Vagina (tissue), 2 donors: ENCODE measurements at regions of chr12 and their contacts with region 1.

Region 1: DNA sequence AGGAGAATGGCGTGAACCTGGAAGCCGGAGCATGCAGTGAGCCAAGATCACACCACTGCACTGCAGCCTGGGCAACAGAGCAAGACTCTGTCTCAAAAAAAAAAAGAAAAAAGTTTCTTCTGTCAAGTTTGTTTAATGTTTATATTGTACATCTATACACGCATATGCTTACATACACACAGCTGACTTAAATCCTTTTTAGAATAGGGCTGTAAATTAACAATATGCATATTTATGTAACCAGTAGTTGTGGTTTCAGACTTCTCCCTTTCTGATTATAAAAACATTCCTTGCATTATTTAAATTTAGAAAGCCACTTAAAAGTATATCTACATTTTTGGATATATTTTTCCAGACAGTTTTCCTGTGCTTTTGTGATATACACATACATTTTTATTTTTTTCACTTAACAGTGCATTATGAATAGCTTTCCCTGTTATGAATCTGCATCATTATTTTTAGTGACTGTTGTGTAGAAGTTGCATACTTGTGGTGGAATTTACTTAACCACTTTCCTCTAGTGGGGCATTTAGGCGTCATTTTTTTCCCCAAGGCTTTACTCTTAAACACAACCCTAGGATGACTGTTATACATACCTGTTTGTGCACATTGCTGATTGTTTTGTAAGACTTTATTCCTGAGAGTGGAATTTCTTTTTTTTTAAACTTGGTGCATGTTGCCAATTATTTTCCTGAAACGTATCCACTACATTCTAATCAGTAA is 29.4 kb downstream of the POLR3B start:
- DNase-seq: no peak
- H3K4me3 ChIP-seq: no peak overlapping the region
- H3K27ac ChIP-seq: no peak overlapping the region
- H3K4me1 ChIP-seq: no peaks in the 10 kb centered on the region
- H3K27me3 ChIP-seq: no peaks in the 10 kb centered on the region
- CTCF ChIP-seq: no peak
- POLR2A ChIP-seq: no peak

Region 2: DNA sequence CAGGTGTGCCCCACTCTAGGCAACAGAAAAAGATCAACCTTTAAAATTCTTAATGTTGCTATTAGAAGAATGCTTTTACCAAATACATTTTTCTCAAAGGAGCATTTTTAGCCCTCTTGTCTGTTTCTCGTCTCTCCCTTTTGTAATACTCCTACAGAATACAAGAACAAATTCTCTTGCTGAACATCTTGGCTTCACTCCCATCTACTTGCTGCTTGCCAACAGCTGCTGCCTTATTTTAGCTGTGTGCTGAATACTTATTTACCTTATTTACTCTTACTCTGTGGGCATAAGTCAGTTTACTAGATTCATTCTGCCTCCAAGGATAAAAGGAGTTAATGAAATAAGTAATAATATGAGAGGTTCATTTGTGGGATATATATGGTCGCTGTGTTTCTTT is 41.4 kb after region 1 on chr12:
- intact Hi-C with region 1: no loop called
- DNase-seq: no peak
- H3K4me3 ChIP-seq: no peak overlapping the region
- H3K27ac ChIP-seq: no peak overlapping the region
- H3K4me1 ChIP-seq: no peaks in the 10 kb centered on the region
- H3K27me3 ChIP-seq: no peaks in the 10 kb centered on the region
- CTCF ChIP-seq: no peak
- POLR2A ChIP-seq: no peak

Region 3: GRCh38 chr12:106839333-106839732 is 452.4 kb after region 1 on chr12:
- intact Hi-C with region 1: loop called (anchors 5 kb)
- DNase-seq: no peak
- H3K4me3 ChIP-seq: no peak overlapping the region
- H3K27ac ChIP-seq: no peak overlapping the region
- H3K4me1 ChIP-seq: peaks cover 8% of the 10 kb centered on the region
- H3K27me3 ChIP-seq: no peaks in the 10 kb centered on the region
- CTCF ChIP-seq: no peak
- POLR2A ChIP-seq: no peak

Region 4: GRCh38 chr12:106919910-106920544 is 533.1 kb after region 1 on chr12:
- intact Hi-C with region 1: loop called (anchors 5 kb)
- DNase-seq: no peak
- H3K4me3 ChIP-seq: no peak overlapping the region
- H3K27ac ChIP-seq: no peak overlapping the region
- H3K4me1 ChIP-seq: no peaks in the 10 kb centered on the region
- H3K27me3 ChIP-seq: no peaks in the 10 kb centered on the region
- CTCF ChIP-seq: peak; percentile 57 to 78 (median 64)
- POLR2A ChIP-seq: no peak

Region 5: GRCh38 chr12:107109741-107110719 is 723.1 kb after region 1 on chr12:
- intact Hi-C with region 1: loop called (anchors 10 kb)
- DNase-seq: no peak
- H3K4me3 ChIP-seq: no peak overlapping the region
- H3K27ac ChIP-seq: no peak overlapping the region
- H3K4me1 ChIP-seq: no peaks in the 10 kb centered on the region
- H3K27me3 ChIP-seq: no peaks in the 10 kb centered on the region
- CTCF ChIP-seq: no peak
- POLR2A ChIP-seq: no peak